Activated CD4-positive, alpha-beta memory T cell treated with anti-CD3 and anti-CD28 coated beads for 36 hours (primary cell): ENCODE measurements at regions of chr22 and their contacts with region 1.

Region 1: GRCh38 chr22:50620593-50621355 is 7.2 kb downstream of the ARSA start:
- DNase-seq: peak; percentile 85
- H3K4me3 Mint-ChIP-seq: peak overlapping the region; percentile 75
- H3K27ac Mint-ChIP-seq: peak overlapping the region; percentile 97
- H3K4me1 Mint-ChIP-seq: peaks cover 37% of the 10 kb centered on the region
- H3K27me3 Mint-ChIP-seq: no peaks in the 10 kb centered on the region

Region 2: GRCh38 chr22:50276143-50276542 is 344.6 kb before region 1 on chr22:
- CTCF ChIA-PET with region 1: interaction called, 6 read pairs
- POLR2A ChIA-PET with region 1: no interaction called
- intact Hi-C with region 1: loop called (anchors 5 kb)
- DNase-seq: peak; percentile 78
- H3K4me3 Mint-ChIP-seq: no peak overlapping the region
- H3K27ac Mint-ChIP-seq: no peak overlapping the region
- H3K4me1 Mint-ChIP-seq: no peaks in the 10 kb centered on the region
- H3K27me3 Mint-ChIP-seq: no peaks in the 10 kb centered on the region

Region 3: DNA sequence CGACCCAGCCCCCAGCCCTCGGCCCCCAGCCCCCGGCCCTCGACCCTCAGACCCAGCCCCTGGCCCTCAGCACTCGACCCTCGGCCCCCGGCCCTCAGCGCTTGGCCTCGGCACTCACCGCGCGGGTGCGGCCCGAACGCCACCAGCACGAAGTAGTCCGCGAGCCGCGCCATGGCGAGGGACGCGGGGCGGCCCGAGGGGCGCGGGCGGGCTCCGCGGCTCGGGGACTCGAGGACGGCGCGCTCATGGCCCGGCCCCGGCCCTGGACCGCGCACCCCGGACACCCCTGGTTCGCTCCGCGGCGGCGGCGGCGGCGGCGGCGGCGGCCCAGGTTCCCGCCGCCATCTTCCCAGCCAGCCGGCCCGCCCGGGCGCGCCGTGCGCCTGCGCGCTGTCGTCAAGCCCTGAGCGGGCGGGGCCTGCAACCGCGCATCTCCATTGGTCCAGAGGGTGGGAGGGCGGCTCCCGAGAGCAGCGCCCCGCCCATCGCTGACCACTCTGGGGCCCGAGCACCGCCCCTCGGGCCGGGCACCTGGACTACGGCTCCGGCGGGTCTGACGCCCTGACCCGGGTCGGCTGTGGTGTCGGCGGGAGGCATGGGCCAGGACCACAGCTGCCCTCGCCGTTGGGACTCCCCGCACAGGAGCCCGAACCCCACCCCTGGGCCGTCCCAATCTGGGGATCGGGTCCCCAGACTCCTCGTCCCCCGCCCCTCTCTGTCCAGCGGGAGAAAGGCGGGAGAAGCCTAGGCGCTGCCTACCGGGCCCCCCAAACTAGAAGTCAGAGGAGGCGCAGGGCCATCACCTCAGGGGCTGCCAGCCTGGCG is 145.9 kb before region 1 on chr22 and contains the start of gene SBF1:
- CTCF ChIA-PET with region 1: interaction called, 9 read pairs
- POLR2A ChIA-PET with region 1: interaction called, 6 read pairs
- intact Hi-C with region 1: loop called (anchors 1 kb)
- DNase-seq: peak; percentile 93
- H3K4me3 Mint-ChIP-seq: peak within 1 kb of the TSS; percentile 95
- H3K27ac Mint-ChIP-seq: peak within 1 kb of the TSS; percentile 78
- H3K4me1 Mint-ChIP-seq: peaks cover 47% of the 10 kb centered on the region
- H3K27me3 Mint-ChIP-seq: no peaks in the 10 kb centered on the region
- total RNA-seq, gene SBF1: 110 to 112 TPM

Region 4: GRCh38 chr22:50525390-50526068 is 95.2 kb before region 1 on chr22 and contains the start of gene SCO2:
- CTCF ChIA-PET with region 1: interaction called, 102 read pairs
- POLR2A ChIA-PET with region 1: interaction called, 49 read pairs
- intact Hi-C with region 1: loop called (anchors 1 kb)
- DNase-seq: peak; percentile 99
- H3K4me3 Mint-ChIP-seq: peak within 1 kb of the TSS; percentile 83
- H3K27ac Mint-ChIP-seq: peak within 1 kb of the TSS; percentile 95
- H3K4me1 Mint-ChIP-seq: peaks cover 42% of the 10 kb centered on the region
- H3K27me3 Mint-ChIP-seq: no peaks in the 10 kb centered on the region
- total RNA-seq, gene SCO2: 1.9 to 5.6 TPM

Region 5: DNA sequence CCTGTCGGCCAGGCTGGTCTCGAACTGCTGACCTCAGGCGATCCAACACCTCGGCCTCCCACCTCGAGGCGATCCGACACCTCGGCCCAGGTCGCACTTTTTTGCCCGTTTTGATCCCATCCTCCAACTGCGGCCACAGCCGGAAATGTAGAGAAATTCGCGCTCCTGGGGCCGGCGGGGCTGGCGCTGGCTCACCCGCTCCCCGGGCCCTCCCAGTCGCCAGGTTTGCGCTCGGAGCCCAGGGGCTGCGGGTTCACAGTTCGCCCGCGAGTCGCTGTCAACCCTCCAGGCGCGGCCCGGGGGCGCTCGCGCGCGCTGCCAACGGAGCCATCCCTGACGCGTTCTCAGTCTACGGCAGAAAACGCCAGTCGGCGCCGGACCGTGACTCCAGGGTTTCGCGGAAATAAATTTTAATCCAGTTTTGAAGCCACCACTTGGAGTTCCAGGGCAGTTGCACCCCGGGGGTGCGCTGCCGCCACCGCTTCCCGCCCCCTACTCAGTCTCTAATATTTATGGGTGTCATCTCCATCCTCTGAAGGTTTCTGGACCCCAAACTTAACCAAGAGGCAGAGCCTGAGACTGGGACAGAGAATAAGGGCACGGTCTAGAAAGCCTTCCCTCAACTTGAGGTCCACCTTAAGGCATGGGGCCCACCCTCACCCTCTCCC is 76.6 kb before region 1 on chr22:
- CTCF ChIA-PET with region 1: interaction called, 22 read pairs
- POLR2A ChIA-PET with region 1: interaction called, 39 read pairs
- intact Hi-C with region 1: loop called (anchors 1 kb)
- DNase-seq: peak; percentile 92
- H3K4me3 Mint-ChIP-seq: peak overlapping the region; percentile 59
- H3K27ac Mint-ChIP-seq: peak overlapping the region; percentile 76
- H3K4me1 Mint-ChIP-seq: peaks cover 57% of the 10 kb centered on the region
- H3K27me3 Mint-ChIP-seq: no peaks in the 10 kb centered on the region